ENCODE measurements at regions of chr12 and their contacts with region 1.

Region 1: GRCh38 chr12:64890873-64891468 is 66.5 kb downstream of the TBC1D30 start:
- DNase-seq: no peak
- ATAC-seq: peak; percentile 80 to 86
- H3K4me3 ChIP-seq: no peak overlapping the region
- H3K27ac ChIP-seq: no peak overlapping the region
- H3K4me1 ChIP-seq: peaks cover 8% of the 10 kb centered on the region
- H3K27me3 ChIP-seq: no peaks in the 10 kb centered on the region
- CTCF ChIP-seq: peak; percentile 86

Region 2: GRCh38 chr12:64596252-64596793 is 294.6 kb before region 1 on chr12:
- intact Hi-C with region 1: no loop called
- DNase-seq: no peak
- ATAC-seq: peak; percentile 82 to 84
- H3K4me3 ChIP-seq: no peak overlapping the region
- H3K27ac ChIP-seq: no peak overlapping the region
- H3K4me1 ChIP-seq: peaks cover 31% of the 10 kb centered on the region
- H3K27me3 ChIP-seq: no peaks in the 10 kb centered on the region
- CTCF ChIP-seq: no peak

Region 3: DNA sequence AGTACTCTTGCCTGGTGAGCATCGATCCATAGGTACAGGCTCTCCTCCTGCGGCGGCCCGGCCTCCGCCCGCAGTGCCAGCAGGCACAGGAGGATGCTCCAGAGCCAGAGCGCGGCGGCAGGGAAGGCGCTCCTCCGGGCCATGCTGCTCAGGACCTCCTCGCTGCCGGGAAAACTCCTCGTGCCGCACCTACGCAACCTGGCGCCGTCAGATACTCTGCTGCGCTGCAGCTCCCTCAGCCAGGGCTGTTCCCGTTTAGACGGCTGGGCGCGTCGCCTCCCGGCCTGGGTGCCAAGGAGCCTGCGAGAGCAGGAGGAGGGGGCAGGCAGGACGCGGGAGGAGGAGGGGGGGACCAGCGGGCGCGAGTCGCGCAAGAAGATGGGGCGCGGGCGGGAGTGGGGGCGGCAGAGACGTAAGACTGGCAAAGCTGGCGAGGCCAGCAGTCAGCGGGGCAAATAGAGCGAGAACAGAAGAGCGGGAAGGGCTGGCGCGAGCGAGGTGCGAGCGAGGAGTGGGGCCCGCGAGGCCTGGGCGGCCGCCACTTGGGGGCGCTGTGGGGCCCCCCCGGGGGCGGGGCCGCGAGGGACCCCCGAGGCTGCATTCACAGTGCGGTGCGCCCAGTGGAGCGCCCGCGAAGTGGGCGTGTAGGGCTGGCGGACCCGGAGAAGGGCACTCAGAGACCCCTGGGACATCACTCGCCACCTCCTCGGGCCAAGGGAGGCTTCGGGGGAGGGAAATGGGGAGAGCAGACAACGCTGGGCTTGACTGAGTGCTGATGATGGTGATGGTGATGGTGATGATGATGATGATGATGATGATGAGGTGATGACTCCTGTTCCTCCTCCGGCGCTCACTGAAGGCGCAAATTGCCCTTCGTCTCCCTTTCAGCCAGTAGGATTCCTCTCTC is 230.3 kb after region 1 on chr12 and contains the start of gene WIF1:
- intact Hi-C with region 1: loop called (anchors 5 kb)
- DNase-seq: peak; percentile 84
- ATAC-seq: peak; percentile 91 to 92
- H3K4me3 ChIP-seq: peak within 1 kb of the TSS; percentile 47
- H3K27ac ChIP-seq: peak within 1 kb of the TSS; percentile 15
- H3K4me1 ChIP-seq: peaks cover 6% of the 10 kb centered on the region
- H3K27me3 ChIP-seq: peaks cover 43% of the 10 kb centered on the region
- CTCF ChIP-seq: peak; percentile 51
- total RNA-seq, gene WIF1: 97.0 TPM

Region 4: GRCh38 chr12:65392491-65392890 is 501.5 kb after region 1 on chr12:
- intact Hi-C with region 1: no loop called
- DNase-seq: no peak
- ATAC-seq: no peak
- H3K4me3 ChIP-seq: no peak overlapping the region
- H3K27ac ChIP-seq: no peak overlapping the region
- H3K4me1 ChIP-seq: no peaks in the 10 kb centered on the region
- H3K27me3 ChIP-seq: no peaks in the 10 kb centered on the region
- CTCF ChIP-seq: no peak

Measured in lower lobe of right lung (tissue), 2 donors.